BJ (cell line): ENCODE measurements at regions of chr1 and their contacts with region 1.

Region 1: DNA sequence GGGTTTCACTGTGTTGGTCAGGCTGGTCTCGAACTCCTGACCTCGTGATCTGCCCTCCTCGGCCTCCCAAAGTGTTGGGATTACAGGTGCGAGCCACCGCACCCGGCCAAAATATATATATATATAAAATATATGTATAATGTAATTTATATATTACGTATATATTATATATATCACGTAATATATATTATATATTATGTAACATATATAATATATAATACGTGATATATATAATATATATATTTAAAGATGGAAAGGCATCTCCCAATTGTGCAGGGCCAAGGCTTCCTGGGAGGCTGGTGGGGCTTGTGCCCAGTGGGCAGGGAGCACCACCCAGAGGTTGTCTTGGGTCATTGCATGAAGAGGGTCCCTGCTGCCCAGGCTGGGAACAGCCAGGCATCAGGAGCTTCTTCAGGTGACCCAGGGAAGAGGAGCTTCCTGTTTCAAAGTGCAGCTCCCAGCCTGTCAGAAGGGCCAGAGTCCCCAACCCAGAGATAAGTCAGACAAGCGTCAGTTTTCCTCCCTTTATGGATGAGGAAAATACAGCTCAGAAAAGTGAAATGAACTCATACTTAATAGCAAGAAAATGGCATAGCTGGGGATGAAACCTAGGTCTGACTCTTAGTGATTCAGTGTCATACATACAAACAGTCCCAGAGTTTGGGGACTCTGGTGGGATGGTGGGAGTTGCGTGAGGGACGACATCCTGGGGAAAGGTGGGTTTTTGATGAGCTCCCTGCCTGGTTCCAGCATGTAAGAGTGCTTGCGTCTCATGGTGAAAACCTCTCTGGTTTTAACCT is 12.0 kb downstream of the UBE2Q1 start:
- DNase-seq: no peak
- H3K4me3 ChIP-seq: no peak overlapping the region
- H3K27me3 ChIP-seq: peaks cover 5% of the 10 kb centered on the region; the same call in 1 of the 2 replicates
- CTCF ChIP-seq: peak; percentile 75

Region 2: GRCh38 chr1:154512760-154513159 is 33.7 kb before region 1 on chr1:
- CTCF ChIA-PET with region 1: no interaction called
- POLR2A ChIA-PET with region 1: no interaction called
- DNase-seq: no peak
- H3K4me3 ChIP-seq: no peak overlapping the region
- H3K27me3 ChIP-seq: peaks cover 7% of the 10 kb centered on the region
- CTCF ChIP-seq: no peak

Region 3: GRCh38 chr1:154533952-154534844 is 12.3 kb before region 1 on chr1:
- CTCF ChIA-PET with region 1: interaction called, 12 read pairs
- POLR2A ChIA-PET with region 1: no interaction called
- DNase-seq: no peak
- H3K4me3 ChIP-seq: no peak overlapping the region
- H3K27me3 ChIP-seq: peaks cover 10% of the 10 kb centered on the region
- CTCF ChIP-seq: peak; percentile 45

Region 4: GRCh38 chr1:154583773-154584172 is 37.3 kb after region 1 on chr1:
- CTCF ChIA-PET with region 1: no interaction called
- POLR2A ChIA-PET with region 1: no interaction called
- DNase-seq: no peak
- H3K4me3 ChIP-seq: no peak overlapping the region
- H3K27me3 ChIP-seq: no peaks in the 10 kb centered on the region
- CTCF ChIP-seq: no peak